ENCODE measurements at regions of chr10 and their contacts with region 1.

Region 1: DNA sequence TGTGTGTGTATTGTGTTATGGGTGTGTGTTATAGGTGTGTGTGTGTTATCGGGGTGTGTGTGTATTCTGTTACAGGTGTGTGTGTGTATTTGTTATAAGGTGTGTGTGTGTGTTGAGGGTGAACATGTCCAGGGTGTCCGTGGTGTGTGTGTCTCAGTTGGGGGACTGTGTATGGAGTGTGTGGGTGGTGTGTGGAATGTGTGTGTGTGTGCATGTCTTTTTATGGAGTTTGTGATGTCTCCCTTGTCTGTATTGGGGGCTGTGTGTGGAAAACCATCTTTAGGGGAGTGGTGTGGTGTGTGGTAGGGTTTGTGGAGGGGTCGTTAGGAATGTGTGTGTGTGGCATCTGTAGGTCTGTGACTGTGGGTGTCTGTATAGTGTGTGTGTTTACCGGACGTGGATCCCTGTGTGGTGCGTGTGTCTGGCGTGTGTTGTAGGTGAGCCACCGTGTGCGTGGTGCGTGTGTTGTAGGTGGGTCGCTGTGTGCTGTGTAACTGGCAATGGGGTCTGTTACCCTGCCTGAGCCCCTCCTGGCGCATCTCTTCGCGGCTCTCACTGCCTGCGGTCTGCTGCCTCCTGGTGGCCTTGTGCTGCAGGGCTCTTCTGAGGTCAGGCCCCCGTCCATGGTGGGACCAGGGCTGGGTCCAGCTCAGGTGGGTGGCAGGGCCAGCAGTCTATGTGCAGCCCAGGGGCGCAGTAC is 61.7 kb downstream of the PALD1 start:
- DNase-seq: no peak
- ATAC-seq: peak; percentile 31 to 64 (median 45)
- H3K4me3 ChIP-seq: no peak overlapping the region
- H3K27ac ChIP-seq: no peak overlapping the region
- H3K4me1 ChIP-seq: no peaks in the 10 kb centered on the region
- H3K27me3 ChIP-seq: peaks cover 0 to 2% (median 0%) of the 10 kb centered on the region in 3 donors
- CTCF ChIP-seq: peak; percentile 53

Region 2: DNA sequence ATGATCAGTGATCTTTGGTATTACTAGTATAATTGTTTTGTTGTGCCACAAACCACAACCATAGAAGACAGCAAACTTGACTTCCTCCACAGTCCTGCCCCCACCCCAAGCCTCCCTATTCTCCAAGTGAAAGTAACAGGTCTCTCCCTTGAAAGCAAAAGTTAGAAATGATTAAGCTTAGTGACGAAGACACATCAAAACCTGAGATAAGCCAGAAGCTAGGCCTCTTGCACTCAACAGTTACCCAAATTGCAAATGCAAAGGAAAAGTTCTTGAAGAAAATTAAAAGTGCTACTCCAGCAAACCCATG is 377.4 kb before region 1 on chr10:
- intact Hi-C with region 1: no loop called
- DNase-seq: no peak
- ATAC-seq: no peak
- H3K4me3 ChIP-seq: no peak overlapping the region
- H3K27ac ChIP-seq: no peak overlapping the region
- H3K4me1 ChIP-seq: peaks cover 53% of the 10 kb centered on the region
- H3K27me3 ChIP-seq: no peaks in the 10 kb centered on the region
- CTCF ChIP-seq: no peak

Region 3: GRCh38 chr10:70461215-70461986 is 78.8 kb before region 1 on chr10:
- intact Hi-C with region 1: loop called (anchors 1 to 2 kb)
- DNase-seq: peak; percentile 49 to 77
- ATAC-seq: peak; percentile 65 to 74 (median 69)
- H3K4me3 ChIP-seq: no peak overlapping the region
- H3K27ac ChIP-seq: no peak overlapping the region
- H3K4me1 ChIP-seq: no peaks in the 10 kb centered on the region
- H3K27me3 ChIP-seq: no peaks in the 10 kb centered on the region
- CTCF ChIP-seq: peak; percentile 90

Region 4: DNA sequence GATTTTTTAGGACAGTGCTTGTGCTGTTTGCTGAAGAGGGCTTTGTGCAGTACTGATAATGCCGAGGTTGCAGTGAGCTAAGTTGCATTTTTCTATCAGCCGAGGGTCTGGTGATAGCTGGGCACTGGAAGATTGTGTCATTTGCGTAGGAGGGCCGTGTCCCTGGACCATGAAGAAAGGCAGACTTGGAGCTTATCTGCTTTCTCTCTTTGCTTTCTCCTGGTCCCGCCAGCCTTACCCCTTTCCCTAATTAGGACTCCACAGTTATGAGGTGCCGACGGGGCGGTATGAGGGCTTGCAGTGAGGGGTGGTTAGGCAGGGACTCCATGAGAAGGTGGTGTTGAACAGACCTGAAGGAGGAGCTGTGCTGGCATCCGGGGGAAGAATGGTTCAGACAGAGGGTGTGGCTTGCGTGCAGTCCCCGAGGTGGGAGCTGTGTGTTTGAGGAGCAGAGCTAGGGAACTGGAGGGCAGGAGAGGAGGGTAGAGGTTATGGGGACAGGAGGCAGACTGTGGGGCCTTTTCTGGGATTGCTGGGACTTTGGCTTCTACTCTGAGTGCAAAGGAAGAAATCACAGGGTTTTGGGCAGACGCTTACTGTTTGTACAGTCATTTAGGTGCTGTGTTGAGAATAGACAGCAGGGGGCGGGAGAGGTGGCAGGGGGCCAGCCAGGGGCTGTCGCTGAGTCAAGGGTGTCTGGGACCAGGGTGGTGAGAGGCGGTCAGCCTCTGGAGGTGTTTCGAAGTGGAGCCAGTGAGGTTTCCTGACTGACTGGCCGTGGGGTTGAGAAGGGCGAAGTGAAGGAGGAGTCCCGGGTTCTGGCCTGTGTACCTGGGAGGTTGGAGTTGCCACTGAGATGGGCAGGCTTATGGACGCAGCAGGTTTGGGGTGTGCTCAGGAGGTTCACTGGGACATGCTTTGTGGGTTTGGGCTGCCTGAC is 18.9 kb after region 1 on chr10:
- intact Hi-C with region 1: no loop called
- DNase-seq: peak in 1 of 2 donors; percentile 63
- ATAC-seq: peak in 3 of 4 donors; percentile 62 to 78 (median 76)
- H3K4me3 ChIP-seq: no peak overlapping the region
- H3K27ac ChIP-seq: no peak overlapping the region
- H3K4me1 ChIP-seq: peaks cover 10% of the 10 kb centered on the region
- H3K27me3 ChIP-seq: no peaks in the 10 kb centered on the region
- CTCF ChIP-seq: peak; percentile 44